ENCODE measurements at regions of chr18 and their contacts with region 1.

Region 1: GRCh38 chr18:49858309-49859020 is 45.1 kb upstream of the ACAA2 start:
- DNase-seq: peak; percentile 73
- CTCF ChIP-seq: peak; percentile 81

Region 2: GRCh38 chr18:49416511-49416910 is 442.0 kb before region 1 on chr18:
- in situ Hi-C with region 1: no loop called
- DNase-seq: no peak
- CTCF ChIP-seq: no peak

Region 3: GRCh38 chr18:49510393-49511115 is 347.9 kb before region 1 on chr18:
- in situ Hi-C with region 1: loop called (anchors 10 kb)
- DNase-seq: peak; percentile 60
- CTCF ChIP-seq: peak; percentile 72

Region 4: DNA sequence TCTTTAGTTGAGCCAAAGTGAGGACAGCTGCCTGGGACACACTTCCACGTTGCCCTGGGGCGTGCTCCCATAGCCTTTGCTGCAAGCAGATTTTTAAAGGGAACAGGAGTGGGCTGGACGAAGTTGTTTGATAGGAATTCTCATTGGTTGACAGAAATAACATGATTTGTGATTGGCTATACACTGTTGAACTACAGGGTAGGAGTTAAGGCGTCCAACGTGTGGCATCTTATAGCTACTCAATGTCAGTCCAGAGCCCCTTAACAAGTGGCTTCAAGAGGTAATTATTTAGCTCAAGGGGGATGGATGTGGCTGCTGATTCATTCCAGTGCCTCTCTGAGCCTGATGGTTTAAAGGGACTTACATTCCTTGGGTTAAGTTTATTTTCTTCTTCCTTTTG is 110.6 kb before region 1 on chr18:
- in situ Hi-C with region 1: no loop called
- DNase-seq: no peak
- CTCF ChIP-seq: no peak

Region 5: DNA sequence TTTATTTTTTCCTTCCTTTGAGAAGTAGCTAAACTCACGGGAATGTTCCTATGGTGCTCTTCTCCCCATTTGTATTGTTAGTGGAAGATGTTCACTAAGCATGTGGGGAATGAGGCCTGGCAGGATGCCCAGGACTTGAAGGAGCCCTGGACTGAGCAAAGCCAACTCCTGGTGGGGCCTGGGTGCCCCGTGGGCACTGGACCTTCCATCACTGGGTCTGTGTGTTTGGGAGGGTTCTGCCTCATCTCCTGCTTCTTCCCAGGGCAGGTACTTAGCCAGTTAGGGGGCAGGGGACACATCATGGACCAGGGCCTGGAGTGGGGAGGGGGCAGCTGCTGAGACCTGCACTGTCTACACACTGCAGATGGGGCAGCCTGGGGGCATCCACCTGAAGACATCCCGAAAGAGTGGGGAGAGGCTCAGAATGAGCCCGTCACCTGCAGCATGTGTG is 94.4 kb before region 1 on chr18:
- in situ Hi-C with region 1: no loop called
- DNase-seq: no peak
- CTCF ChIP-seq: no peak